SK-N-SH (cell line): ENCODE measurements at regions of chr2 and their contacts with region 1.

Region 1: GRCh38 chr2:73408198-73408597 is 22.6 kb downstream of the ALMS1 start:
- DNase-seq: no peak
- H3K4me3 ChIP-seq: no peak overlapping the region
- H3K27ac ChIP-seq: no peak overlapping the region
- H3K4me1 ChIP-seq: no peaks in the 10 kb centered on the region
- H3K27me3 ChIP-seq: no peaks in the 10 kb centered on the region
- CTCF ChIP-seq: no peak
- EP300 ChIP-seq: no peak
- RAD21 ChIP-seq: no peak

Region 2: DNA sequence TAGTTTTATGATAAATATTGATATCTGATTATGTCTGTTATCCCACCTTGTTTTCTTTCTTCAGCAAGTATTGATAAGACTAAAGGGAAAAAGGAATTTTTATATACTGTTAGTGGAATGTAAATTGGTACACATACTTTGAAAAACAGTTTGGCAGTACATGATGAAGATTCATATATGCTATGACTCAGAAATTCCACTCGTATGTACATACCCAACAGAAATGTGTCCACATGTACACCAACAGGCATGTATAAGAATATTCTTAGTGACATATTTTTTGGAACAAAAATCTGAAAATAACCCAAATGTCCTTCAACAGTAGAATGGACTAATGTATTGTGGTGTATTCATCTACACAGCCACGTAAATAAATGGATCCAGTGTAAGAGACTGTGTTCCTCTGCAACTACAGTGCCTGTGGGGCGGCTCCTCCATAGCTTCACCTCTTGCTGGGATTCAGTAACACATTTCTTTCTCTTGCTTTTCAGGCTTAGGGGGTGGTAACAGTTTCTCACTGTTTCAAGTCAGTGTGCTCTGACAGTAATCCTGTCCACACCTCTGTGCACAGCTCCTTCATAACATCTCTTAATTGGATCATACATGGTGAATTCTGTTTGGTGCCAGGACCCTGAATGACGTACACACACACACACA is 58.0 kb before region 1 on chr2:
- CTCF ChIA-PET with region 1: no interaction called
- POLR2A ChIA-PET with region 1: no interaction called
- DNase-seq: no peak
- H3K4me3 ChIP-seq: no peak overlapping the region
- H3K27ac ChIP-seq: no peak overlapping the region
- H3K4me1 ChIP-seq: no peaks in the 10 kb centered on the region
- H3K27me3 ChIP-seq: peaks cover 22% of the 10 kb centered on the region; the same call in 1 of the 2 replicates
- CTCF ChIP-seq: no peak
- EP300 ChIP-seq: no peak
- RAD21 ChIP-seq: no peak

Region 3: GRCh38 chr2:73386899-73387636 is 21.1 kb before region 1 on chr2:
- CTCF ChIA-PET with region 1: no interaction called
- POLR2A ChIA-PET with region 1: no interaction called
- DNase-seq: no peak
- H3K4me3 ChIP-seq: peak overlapping the region; percentile 91 to 92
- H3K27ac ChIP-seq: peak overlapping the region; percentile 78 to 92; a peak in 2 of 4 replicates
- H3K4me1 ChIP-seq: peaks cover 5 to 11% of the 10 kb centered on the region in 2 experiments; a peak in 3 of 4 replicates
- H3K27me3 ChIP-seq: no peaks in the 10 kb centered on the region
- CTCF ChIP-seq: no peak
- EP300 ChIP-seq: no peak
- RAD21 ChIP-seq: no peak

Region 4: GRCh38 chr2:73418343-73418742 is 10.1 kb after region 1 on chr2:
- CTCF ChIA-PET with region 1: interaction called, 12 read pairs
- POLR2A ChIA-PET with region 1: no interaction called
- DNase-seq: no peak
- H3K4me3 ChIP-seq: no peak overlapping the region
- H3K27ac ChIP-seq: no peak overlapping the region
- H3K4me1 ChIP-seq: peaks cover 0 to 11% of the 10 kb centered on the region in 2 experiments; a peak in 1 of 4 replicates
- H3K27me3 ChIP-seq: no peaks in the 10 kb centered on the region
- CTCF ChIP-seq: no peak
- EP300 ChIP-seq: no peak
- RAD21 ChIP-seq: no peak

Region 5: DNA sequence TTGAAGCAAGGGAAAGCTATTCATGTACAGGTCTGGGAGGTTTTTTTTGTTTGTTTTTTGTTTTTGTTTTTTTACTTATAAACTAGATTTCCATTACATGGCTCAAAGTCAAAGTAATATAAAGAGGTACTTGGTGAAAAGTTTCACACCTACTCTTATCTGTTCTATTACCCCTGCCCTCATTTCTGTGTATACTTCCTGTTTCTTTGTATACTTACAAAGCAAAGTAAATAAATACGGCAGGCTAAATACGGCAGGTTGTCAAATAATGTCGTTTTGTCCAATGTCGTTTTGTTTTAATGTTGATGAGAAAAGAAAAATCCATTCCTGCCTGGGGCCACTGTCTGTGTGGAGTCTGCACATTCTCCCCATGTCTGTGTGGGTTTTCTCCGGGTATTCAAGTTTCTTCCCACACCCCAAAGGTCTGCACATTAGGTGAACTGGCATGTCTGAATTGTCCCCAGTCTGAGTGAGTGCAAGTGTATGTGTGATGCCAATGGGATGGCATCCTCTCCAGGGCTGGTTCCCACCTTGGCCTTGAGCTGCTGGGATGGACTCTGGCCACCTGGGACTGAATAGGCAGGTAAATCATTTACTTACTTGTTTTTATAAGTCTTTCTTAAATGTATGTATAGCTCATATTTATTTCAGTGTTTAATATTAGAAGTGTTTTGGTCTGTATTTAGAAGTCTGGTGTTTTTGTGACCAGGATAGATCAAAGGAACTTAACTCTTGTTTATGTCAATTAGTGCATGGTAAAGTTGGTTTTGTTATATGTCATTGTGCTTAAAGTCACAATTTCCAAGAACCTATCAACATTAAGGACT is 433.9 kb after region 1 on chr2:
- CTCF ChIA-PET with region 1: no interaction called
- POLR2A ChIA-PET with region 1: no interaction called
- DNase-seq: no peak
- H3K4me3 ChIP-seq: no peak overlapping the region
- H3K27ac ChIP-seq: no peak overlapping the region
- H3K4me1 ChIP-seq: peaks cover 0 to 9% of the 10 kb centered on the region in 2 experiments; a peak in 1 of 4 replicates
- H3K27me3 ChIP-seq: no peaks in the 10 kb centered on the region
- CTCF ChIP-seq: no peak
- EP300 ChIP-seq: no peak
- RAD21 ChIP-seq: no peak